Cardiac septum (tissue), 1 donor: ENCODE measurements at regions of chr17 and their contacts with region 1.

Region 1: GRCh38 chr17:32783602-32784001 is 93.3 kb downstream of the MYO1D start:
- DNase-seq: no peak

Region 2: DNA sequence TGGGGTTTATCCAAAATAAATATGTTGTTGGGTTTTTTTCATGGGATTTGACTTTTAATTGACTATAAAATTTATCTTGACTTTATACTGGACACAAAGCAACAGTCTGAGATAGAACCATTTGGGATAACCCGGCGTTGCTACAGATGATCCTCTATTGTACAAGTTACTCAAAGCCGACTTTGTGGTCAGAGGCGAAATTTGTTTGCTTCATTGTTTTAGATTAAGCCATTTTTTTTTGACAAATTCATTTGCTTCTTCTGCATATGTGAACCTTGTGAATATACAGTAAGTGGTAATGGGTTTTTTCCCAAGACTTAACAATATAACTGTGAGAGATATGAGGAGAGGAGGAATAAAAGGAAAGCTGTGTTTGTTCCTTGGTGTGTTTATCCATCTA is 81.5 kb after region 1 on chr17:
- intact Hi-C with region 1: no loop called
- DNase-seq: no peak

Region 3: DNA sequence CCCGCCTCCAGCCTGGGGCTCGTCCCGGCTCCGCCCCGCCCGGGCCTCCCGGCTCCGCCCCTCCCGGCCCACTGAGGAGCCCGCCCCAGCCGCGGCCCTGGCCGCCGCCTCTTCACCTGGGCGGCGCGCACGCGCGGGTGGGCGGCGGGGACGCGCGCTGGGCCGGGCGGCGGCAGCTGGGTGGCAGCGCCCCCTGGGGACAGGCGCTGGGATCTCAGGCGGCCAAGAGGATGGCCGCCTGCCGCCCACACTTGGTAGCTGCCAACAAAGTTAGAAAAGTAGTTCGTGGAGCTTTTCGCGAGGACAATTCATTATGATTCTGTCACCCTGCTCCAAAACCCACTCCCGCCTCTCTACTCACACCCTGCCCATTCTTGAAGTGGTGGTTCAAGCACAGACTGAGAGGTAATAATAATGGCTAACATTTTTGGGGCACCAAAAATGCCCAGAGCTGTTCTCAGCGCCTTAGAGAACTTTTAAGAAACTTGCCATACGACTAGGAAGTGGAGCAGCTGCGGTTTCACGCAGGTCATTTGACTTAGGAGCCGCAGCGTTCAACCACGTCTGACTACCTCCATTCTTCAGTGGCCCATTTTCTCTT is 93.7 kb after region 1 on chr17:
- intact Hi-C with region 1: loop called (anchors 1 kb)
- DNase-seq: peak; percentile 95

Region 4: GRCh38 chr17:32909787-32910369 is 126.3 kb after region 1 on chr17:
- intact Hi-C with region 1: loop called (anchors 2 kb)
- DNase-seq: no peak